ENCODE measurements at regions of chr22 and their contacts with region 1.

Region 1: DNA sequence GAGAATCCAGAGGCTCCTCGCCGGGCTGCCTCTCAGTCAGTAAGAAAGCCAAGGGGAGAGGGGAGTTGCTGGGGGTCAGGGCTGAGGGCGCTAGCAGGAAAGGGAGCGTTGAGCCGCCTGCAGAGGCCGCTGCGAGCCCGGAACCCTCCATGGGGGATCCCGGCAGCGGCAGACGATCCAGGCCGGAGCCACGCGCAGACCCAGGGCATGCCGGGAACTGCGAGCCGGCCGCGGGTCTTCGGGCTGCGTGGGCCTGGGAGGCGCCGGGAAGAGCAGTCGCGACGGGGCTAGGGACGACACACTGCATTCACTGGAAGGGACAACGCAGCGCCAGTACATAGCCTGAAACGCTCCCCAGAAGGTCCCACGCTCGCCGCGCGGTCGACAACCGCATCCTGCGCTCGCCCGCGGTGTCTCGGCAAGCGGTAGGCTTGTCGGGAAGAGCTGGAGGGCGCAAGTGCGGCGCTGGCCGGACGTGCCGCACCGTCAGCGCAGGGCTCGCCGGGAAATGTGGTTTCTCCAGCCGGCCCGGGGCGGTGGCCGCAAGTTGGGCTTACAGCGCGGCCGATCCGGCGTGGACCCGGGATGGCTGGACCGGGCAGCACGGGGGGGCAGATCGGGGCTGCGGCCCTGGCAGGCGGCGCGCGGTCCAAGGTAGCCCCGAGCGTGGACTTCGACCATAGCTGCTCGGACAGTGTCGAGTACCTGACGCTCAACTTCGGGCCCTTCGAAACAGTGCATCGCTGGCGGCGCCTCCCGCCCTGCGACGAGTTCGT is at the start of gene LZTR1:
- DNase-seq: peak in 1 of 2 donors; percentile 88
- H3K4me3 ChIP-seq: peak within 1 kb of the TSS; percentile 74 to 90
- H3K27ac ChIP-seq: peak within 1 kb of the TSS; percentile 73 to 85
- H3K4me1 ChIP-seq: peaks cover 11 to 23% of the 10 kb centered on the region in 2 donors
- H3K27me3 ChIP-seq: no peaks in the 10 kb centered on the region
- CTCF ChIP-seq: peak; percentile 42 to 57 (median 49)
- total RNA-seq, gene LZTR1: 72.8 TPM

Region 2: DNA sequence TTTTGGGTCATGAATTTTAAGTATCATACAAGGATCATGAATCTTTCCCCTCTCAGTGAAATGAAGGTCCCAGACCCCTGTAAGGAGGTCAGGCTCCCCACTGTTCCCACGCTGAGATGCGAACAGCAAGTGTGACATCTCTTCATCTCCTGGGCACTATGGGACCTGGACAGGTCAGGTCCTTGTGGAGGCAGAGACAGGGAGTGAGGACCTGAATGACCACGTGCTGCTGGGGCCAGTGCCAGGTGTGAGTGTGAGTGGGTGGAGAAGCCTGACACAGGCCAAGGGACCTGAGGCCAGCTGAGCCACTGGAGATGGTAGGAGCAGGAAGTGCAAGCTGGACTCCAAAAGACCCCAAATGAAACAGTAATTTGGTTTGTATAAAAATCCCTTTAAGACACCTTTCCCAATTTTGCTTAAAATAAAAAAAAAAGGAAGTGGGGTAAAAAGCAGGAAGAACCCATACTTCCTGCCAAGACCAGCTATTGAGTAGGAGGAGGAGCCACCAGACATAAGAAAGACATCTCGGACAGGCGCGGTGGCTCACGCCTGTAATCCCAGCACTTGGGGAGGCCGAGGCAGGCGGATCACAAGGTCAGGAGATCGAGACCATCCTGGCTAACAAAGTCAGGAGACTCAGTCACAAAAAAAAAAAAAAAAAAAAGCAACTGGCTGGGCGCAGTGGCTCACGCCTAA is 243.4 kb before region 1 on chr22:
- intact Hi-C with region 1: no loop called
- DNase-seq: no peak
- H3K4me3 ChIP-seq: no peak overlapping the region
- H3K27ac ChIP-seq: no peak overlapping the region
- H3K4me1 ChIP-seq: no peaks in the 10 kb centered on the region
- H3K27me3 ChIP-seq: no peaks in the 10 kb centered on the region
- CTCF ChIP-seq: no peak

Region 3: GRCh38 chr22:20916983-20917810 is 64.8 kb before region 1 on chr22 and contains the start of gene CRKL:
- intact Hi-C with region 1: loop called (anchors 1 kb)
- DNase-seq: peak; percentile 88 to 98
- H3K4me3 ChIP-seq: peak within 1 kb of the TSS; percentile 95 to 100
- H3K27ac ChIP-seq: peak within 1 kb of the TSS; percentile 92 to 96
- H3K4me1 ChIP-seq: peaks cover 5 to 10% of the 10 kb centered on the region in 2 donors
- H3K27me3 ChIP-seq: no peaks in the 10 kb centered on the region
- CTCF ChIP-seq: peak; percentile 93 to 97 (median 96)
- total RNA-seq, gene CRKL: 21.2 TPM

Region 4: GRCh38 chr22:21001560-21002325 is 19.8 kb after region 1 on chr22 and contains the start of gene THAP7:
- intact Hi-C with region 1: loop called (anchors 1 kb)
- DNase-seq: peak; percentile 91 to 99
- H3K4me3 ChIP-seq: peak within 1 kb of the TSS; percentile 70 to 94
- H3K27ac ChIP-seq: peak within 1 kb of the TSS; percentile 97 to 98
- H3K4me1 ChIP-seq: peaks cover 13 to 30% of the 10 kb centered on the region in 2 donors
- H3K27me3 ChIP-seq: no peaks in the 10 kb centered on the region
- CTCF ChIP-seq: no peak
- total RNA-seq, gene THAP7: 37.9 TPM

Region 5: DNA sequence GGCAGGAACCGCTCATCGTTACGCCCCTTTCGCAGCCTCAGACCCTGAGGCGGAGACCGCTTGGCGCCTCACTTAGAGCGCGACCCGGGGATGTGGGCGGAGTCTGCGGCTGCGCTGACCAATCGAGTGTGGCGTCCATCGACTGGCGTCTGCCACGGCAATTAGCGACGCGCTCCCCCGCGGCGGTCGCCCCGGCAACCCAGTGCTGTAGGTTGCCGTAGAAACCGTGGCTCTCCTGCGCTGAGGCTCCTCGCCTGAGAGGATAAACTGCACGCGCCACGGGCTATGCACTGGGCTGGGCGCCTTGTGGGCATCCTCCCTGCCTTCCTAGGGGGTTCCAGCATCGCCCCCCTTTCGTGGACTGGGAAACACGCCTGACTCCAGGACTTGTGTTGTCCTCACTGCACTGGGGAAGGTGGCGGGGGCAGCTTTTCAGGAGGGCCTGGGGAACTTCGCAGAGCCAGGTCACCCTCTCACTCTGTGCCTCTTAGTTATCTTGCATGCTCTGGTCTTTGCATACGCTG is 32.3 kb after region 1 on chr22:
- intact Hi-C with region 1: loop called (anchors 5 kb)
- DNase-seq: peak; percentile 40 to 91
- H3K4me3 ChIP-seq: peak overlapping the region; percentile 27 to 59
- H3K27ac ChIP-seq: peak overlapping the region; percentile 57 to 68
- H3K4me1 ChIP-seq: peaks cover 10 to 18% of the 10 kb centered on the region in 2 donors
- H3K27me3 ChIP-seq: no peaks in the 10 kb centered on the region
- CTCF ChIP-seq: no peak

Region 6: DNA sequence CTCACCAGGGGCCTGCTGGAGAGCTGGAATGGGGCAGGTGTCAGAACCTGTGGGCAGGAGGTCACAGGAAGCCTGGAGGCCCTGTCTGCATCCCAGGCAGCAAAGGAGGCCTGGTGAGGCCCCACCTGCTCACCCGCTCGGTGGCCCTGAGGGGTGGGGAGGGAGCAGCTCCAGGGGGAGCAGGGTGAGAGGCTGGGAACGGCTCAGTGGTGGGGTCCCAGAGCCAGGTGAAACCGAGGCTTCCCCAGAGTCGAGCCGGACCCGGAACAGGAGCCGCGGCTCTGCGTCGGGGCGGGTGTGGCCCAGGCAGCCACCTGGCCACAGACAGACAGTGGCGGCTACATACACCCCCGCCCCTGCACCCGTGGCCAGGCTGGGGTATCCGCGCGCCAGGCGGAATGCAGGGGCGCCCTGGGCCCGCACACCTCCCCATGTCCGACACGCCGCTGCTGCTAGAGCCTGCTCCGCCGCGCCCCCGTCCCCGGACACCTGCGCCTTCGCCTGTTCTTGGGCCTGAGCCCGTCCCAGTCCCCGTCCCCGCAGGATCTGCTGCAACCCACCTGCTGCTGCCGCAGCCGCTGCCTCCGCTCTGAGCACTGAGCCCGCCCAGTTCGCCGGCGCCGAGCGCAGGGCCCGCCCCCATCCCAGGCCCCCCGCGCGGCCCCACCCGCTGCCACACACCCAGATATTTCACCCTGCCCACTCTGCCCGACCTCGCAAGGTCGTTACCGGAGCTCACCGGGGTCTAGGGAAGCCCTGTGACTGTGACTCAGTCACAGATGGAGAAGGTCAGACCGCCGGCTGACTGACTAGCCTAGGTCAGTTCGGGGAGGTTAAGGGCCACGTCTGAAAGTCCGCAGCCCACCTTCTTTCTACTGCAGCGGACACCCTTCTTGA is 50.2 kb after region 1 on chr22 and contains the start of gene SLC7A4:
- intact Hi-C with region 1: no loop called
- DNase-seq: no peak
- H3K4me3 ChIP-seq: peak within 1 kb of the TSS; percentile 6 to 30
- H3K27ac ChIP-seq: no peak within 1 kb of the TSS
- H3K4me1 ChIP-seq: no peaks in the 10 kb centered on the region
- H3K27me3 ChIP-seq: no peaks in the 10 kb centered on the region
- CTCF ChIP-seq: no peak
- total RNA-seq, gene SLC7A4: 20.4 TPM

Region 7: GRCh38 chr22:21641789-21642583 is 660.0 kb after region 1 on chr22 and contains the start of gene SDF2L1:
- intact Hi-C with region 1: loop called (anchors 10 kb)
- DNase-seq: peak; percentile 98 to 100
- H3K4me3 ChIP-seq: peak within 1 kb of the TSS; percentile 63 to 83
- H3K27ac ChIP-seq: peak within 1 kb of the TSS; percentile 69 to 80
- H3K4me1 ChIP-seq: peaks cover 0 to 14% of the 10 kb centered on the region in 2 donors
- H3K27me3 ChIP-seq: no peaks in the 10 kb centered on the region
- CTCF ChIP-seq: peak in 2 of 3 experiments; percentile 10 to 16
- total RNA-seq, gene SDF2L1: 37.4 TPM